Activated CD8-positive, alpha-beta T cell treated with anti-CD3 and anti-CD28 coated beads for 36 hours (primary cell): ENCODE measurements at regions of chr16 and their contacts with region 1.

Region 1: DNA sequence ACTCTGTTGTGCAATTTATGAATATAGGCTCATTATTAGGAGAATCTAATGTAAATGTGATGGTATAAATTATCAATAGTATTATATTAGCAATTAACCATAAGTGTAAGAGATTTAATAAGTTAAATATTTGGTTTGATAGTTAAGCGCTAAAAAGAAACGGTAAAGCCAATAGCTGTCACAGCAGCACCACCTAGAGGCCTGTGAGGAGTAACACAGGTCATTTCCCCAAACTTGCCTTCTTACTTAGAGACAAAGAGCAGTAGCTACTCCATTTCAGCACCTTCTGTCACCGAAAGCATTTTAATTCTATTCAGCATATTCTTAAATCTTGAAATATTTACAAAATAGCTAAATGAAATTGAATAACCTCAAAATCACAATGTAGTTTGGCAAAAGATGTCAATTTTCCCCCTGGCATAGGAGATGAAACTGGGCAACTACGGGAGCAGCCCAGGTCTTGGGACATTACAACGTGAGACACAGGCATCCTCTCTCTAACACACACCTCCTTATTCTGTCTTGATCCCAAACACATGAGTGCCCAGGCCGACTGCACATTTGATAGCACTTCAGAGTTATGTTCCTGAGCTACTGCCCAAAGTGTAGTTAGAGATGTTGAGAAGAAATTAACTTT is 14.2 kb upstream of the DYNLRB2 start:
- DNase-seq: peak; percentile 70
- ATAC-seq: peak; percentile 76
- H3K4me3 Mint-ChIP-seq: no peak overlapping the region
- H3K27ac Mint-ChIP-seq: no peak overlapping the region
- H3K4me1 Mint-ChIP-seq: peaks cover 2% of the 10 kb centered on the region
- H3K27me3 Mint-ChIP-seq: no peaks in the 10 kb centered on the region
- CTCF ChIP-seq: peak; percentile 72

Region 2: DNA sequence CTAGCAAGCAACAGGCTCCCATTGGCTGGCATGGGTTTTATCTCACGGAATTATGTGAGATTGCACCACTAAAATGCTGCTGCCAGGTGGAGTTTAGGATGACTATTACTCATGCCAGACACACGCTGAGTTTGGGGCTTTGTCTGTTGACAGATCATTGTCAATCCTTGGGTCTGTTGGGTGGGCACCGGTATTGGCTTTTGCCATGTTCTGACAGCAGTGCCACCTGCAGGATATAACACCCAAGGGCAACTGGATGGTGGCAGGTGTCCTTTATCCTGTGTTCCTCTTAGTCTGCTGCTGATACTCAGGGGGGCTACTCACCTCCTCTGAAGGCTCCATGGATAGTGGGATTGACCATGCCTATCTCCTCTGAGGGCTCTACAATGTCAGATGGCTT is 207.4 kb before region 1 on chr16:
- CTCF ChIA-PET with region 1: no interaction called
- POLR2A ChIA-PET with region 1: no interaction called
- intact Hi-C with region 1: no loop called
- DNase-seq: no peak
- ATAC-seq: no peak
- H3K4me3 Mint-ChIP-seq: no peak overlapping the region
- H3K27ac Mint-ChIP-seq: no peak overlapping the region
- H3K4me1 Mint-ChIP-seq: no peaks in the 10 kb centered on the region
- H3K27me3 Mint-ChIP-seq: peaks cover 7% of the 10 kb centered on the region
- CTCF ChIP-seq: no peak

Region 3: GRCh38 chr16:80387318-80387921 is 139.1 kb before region 1 on chr16:
- CTCF ChIA-PET with region 1: no interaction called
- POLR2A ChIA-PET with region 1: no interaction called
- intact Hi-C with region 1: no loop called
- DNase-seq: no peak
- ATAC-seq: no peak
- H3K4me3 Mint-ChIP-seq: no peak overlapping the region
- H3K27ac Mint-ChIP-seq: no peak overlapping the region
- H3K4me1 Mint-ChIP-seq: no peaks in the 10 kb centered on the region
- H3K27me3 Mint-ChIP-seq: peaks cover 12% of the 10 kb centered on the region
- CTCF ChIP-seq: no peak

Region 4: DNA sequence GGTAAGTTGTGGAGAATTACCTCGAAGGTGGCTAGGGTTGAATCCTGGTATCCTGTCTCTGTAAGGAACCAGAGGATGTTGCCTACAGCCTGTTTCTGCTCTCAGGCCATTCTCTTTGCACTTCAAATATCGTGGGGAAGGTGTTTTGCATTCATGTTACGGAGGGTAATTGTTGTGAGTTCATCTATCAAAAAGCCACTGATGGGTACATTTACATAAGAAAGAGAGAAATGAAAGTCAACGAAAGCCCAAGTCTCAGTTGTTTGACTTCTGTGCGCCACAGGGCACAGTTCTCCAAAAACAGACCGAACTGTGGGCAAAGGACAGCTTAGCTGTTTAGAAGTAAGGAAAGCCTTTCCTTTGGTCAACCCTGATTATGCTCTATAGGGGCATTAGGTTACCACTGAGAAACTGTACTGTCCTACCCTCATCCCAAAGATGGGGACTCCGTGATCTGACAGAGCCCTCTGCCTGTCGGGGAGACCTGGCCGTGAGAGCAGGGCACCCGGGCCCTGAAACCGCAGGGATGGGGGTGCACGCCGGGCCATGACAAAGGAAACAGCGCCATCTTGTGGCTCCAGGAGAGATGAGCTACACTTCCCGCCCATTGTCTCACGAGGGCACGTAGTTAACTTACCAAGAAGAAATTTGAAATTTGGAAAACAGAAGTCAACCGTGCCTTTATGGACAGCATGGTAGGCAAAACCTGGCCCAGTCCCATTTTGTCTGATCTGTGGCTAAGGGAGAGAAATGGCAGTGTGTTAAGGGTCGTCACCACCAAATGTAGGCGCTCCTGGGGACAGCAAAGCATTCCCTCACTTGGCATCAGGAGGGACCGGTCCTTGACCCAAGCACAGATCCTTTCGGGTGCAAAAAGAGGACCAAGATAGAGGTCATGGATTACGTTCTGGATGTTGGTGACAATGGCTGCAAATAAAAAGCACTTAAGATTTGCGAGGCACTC is 60.2 kb before region 1 on chr16:
- CTCF ChIA-PET with region 1: interaction called, 21 read pairs
- POLR2A ChIA-PET with region 1: no interaction called
- intact Hi-C with region 1: no loop called
- DNase-seq: peak; percentile 71
- ATAC-seq: peak; percentile 69
- H3K4me3 Mint-ChIP-seq: no peak overlapping the region
- H3K27ac Mint-ChIP-seq: no peak overlapping the region
- H3K4me1 Mint-ChIP-seq: no peaks in the 10 kb centered on the region
- H3K27me3 Mint-ChIP-seq: peaks cover 3% of the 10 kb centered on the region
- CTCF ChIP-seq: peak; percentile 91

Region 5: GRCh38 chr16:80564394-80564793 is 37.9 kb after region 1 on chr16:
- CTCF ChIA-PET with region 1: interaction called, 12 read pairs
- POLR2A ChIA-PET with region 1: no interaction called
- intact Hi-C with region 1: no loop called
- DNase-seq: peak; percentile 22
- ATAC-seq: peak; percentile 43
- H3K4me3 Mint-ChIP-seq: no peak overlapping the region
- H3K27ac Mint-ChIP-seq: peak overlapping the region; percentile 66
- H3K4me1 Mint-ChIP-seq: peaks cover 25% of the 10 kb centered on the region
- H3K27me3 Mint-ChIP-seq: no peaks in the 10 kb centered on the region
- CTCF ChIP-seq: no peak

Region 6: GRCh38 chr16:80610188-80611156 is 83.9 kb after region 1 on chr16:
- CTCF ChIA-PET with region 1: interaction called, 11 read pairs
- POLR2A ChIA-PET with region 1: no interaction called
- intact Hi-C with region 1: no loop called
- DNase-seq: no peak
- ATAC-seq: no peak
- H3K4me3 Mint-ChIP-seq: no peak overlapping the region
- H3K27ac Mint-ChIP-seq: no peak overlapping the region
- H3K4me1 Mint-ChIP-seq: peaks cover 9% of the 10 kb centered on the region
- H3K27me3 Mint-ChIP-seq: no peaks in the 10 kb centered on the region
- CTCF ChIP-seq: no peak

Region 7: GRCh38 chr16:80809461-80809955 is 283.0 kb after region 1 on chr16:
- CTCF ChIA-PET with region 1: interaction called, 13 read pairs
- POLR2A ChIA-PET with region 1: no interaction called
- intact Hi-C with region 1: no loop called
- DNase-seq: no peak
- ATAC-seq: no peak
- H3K4me3 Mint-ChIP-seq: no peak overlapping the region
- H3K27ac Mint-ChIP-seq: no peak overlapping the region
- H3K4me1 Mint-ChIP-seq: peaks cover 20% of the 10 kb centered on the region
- H3K27me3 Mint-ChIP-seq: peaks cover 10% of the 10 kb centered on the region
- CTCF ChIP-seq: no peak

Region 8: GRCh38 chr16:80852261-80852872 is 325.8 kb after region 1 on chr16:
- CTCF ChIA-PET with region 1: interaction called, 31 read pairs
- POLR2A ChIA-PET with region 1: no interaction called
- intact Hi-C with region 1: no loop called
- DNase-seq: peak; percentile 41
- ATAC-seq: no peak
- H3K4me3 Mint-ChIP-seq: no peak overlapping the region
- H3K27ac Mint-ChIP-seq: no peak overlapping the region
- H3K4me1 Mint-ChIP-seq: no peaks in the 10 kb centered on the region
- H3K27me3 Mint-ChIP-seq: peaks cover 4% of the 10 kb centered on the region
- CTCF ChIP-seq: peak; percentile 41